ENCODE measurements at regions of chr16 and their contacts with region 1.

Region 1: DNA sequence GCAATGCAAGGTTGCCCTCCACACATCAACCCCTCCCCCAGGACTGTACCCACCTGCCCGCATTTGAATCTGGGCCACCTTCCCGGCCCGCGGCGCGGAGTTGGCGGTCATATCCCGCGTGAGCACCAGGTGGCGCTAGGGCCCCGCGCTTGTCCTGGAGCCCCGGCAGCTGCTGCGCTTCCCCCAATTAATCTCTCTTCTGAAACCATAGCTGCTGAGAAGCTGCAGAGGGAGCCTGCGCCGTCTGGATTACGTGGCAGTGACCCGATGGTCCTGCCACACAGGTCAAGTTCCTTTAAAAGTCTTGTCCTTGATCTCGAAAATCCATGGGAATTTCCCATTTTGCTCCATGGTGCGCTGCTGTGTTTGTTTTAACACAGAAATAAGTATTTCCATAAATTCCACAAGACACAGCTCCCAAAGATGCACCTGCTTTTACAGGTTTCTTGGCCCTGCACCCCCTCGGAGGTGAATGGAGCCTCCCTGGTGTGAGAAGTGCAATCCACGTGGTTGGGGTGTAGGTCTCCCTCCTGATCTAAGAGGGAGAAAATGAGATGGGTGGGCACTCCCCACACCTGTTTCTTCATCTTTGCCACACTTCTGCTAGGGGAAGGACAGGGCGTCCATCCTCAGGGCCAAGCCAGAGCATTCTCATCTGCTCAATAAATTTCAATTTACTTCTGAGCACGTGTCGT is 22.1 kb downstream of the COX4I1 start:
- DNase-seq: peak; percentile 89
- ATAC-seq: peak; percentile 80
- H3K4me3 Mint-ChIP-seq: no peak overlapping the region
- H3K27ac Mint-ChIP-seq: no peak overlapping the region
- H3K4me1 Mint-ChIP-seq: peaks cover 4% of the 10 kb centered on the region; the same call in 1 of the 2 replicates
- H3K27me3 Mint-ChIP-seq: peaks cover 29% of the 10 kb centered on the region
- CTCF ChIP-seq: peak; percentile 98

Region 2: DNA sequence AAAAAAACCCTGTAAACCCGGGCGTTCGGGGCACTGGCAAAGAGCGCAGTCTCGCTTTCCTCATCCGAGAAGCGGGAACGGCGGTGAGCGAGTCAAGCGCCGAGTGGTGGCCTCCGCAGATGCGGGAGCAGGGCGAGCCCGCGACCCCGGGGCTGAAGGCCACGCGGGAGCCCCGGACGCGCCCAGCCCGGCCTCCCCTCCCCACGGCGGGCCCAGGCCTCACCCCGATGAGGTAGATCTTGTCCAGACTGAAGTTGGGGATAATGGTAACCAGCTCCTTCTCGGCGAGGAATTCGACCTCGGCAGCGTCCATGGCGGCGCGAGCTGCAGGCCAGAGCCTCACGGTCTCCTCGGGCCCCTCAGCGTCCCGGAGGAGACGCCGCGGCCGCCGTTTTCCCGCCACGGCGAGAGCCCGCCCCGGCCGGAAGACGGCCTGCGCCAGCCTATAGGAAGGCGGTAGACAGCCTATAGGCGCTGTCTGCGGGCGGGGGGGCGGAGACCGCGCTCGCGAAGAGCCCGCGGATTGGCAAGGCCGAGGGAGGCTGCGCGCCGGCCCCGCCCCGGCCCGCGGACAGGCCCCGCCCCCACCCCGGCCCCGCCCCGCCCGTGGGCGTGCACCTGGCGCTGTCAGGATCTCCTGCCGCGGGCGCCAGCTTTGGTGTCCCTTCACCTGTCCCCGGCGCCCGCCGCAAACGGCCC is 132.9 kb before region 1 on chr16 and contains the start of gene GINS2:
- CTCF ChIA-PET with region 1: no interaction called
- POLR2A ChIA-PET with region 1: no interaction called
- DNase-seq: peak; percentile 93
- ATAC-seq: peak; percentile 99
- H3K4me3 Mint-ChIP-seq: peak within 1 kb of the TSS; percentile 74
- H3K27ac Mint-ChIP-seq: no peak within 1 kb of the TSS
- H3K4me1 Mint-ChIP-seq: peaks cover 10% of the 10 kb centered on the region
- H3K27me3 Mint-ChIP-seq: peaks cover 17% of the 10 kb centered on the region; the same call in 1 of the 2 replicates
- CTCF ChIP-seq: no peak
- total RNA-seq, gene GINS2: 35.5 to 38.4 TPM (median 38.0 TPM) in 3 replicates

Region 3: GRCh38 chr16:85699628-85700027 is 122.0 kb before region 1 on chr16:
- CTCF ChIA-PET with region 1: no interaction called
- POLR2A ChIA-PET with region 1: no interaction called
- DNase-seq: no peak
- ATAC-seq: 0 out of 2 replicates have a peak, but pooled peaks have one; percentile 7
- H3K4me3 Mint-ChIP-seq: no peak overlapping the region
- H3K27ac Mint-ChIP-seq: no peak overlapping the region
- H3K4me1 Mint-ChIP-seq: 0 out of 2 replicates have a peak, but pooled peaks cover 6% of the 10 kb centered on the region
- H3K27me3 Mint-ChIP-seq: peaks cover 4% of the 10 kb centered on the region
- CTCF ChIP-seq: no peak

Region 4: GRCh38 chr16:85750827-85751697 is 70.5 kb before region 1 on chr16 and contains the start of gene C16orf74:
- CTCF ChIA-PET with region 1: no interaction called
- POLR2A ChIA-PET with region 1: no interaction called
- DNase-seq: peak; percentile 35
- ATAC-seq: peak; percentile 46
- H3K4me3 Mint-ChIP-seq: peak within 1 kb of the TSS; percentile 89
- H3K27ac Mint-ChIP-seq: no peak within 1 kb of the TSS
- H3K4me1 Mint-ChIP-seq: peaks cover 45% of the 10 kb centered on the region
- H3K27me3 Mint-ChIP-seq: peaks cover 26% of the 10 kb centered on the region
- CTCF ChIP-seq: no peak
- total RNA-seq, gene C16orf74: 6.3 to 8.3 TPM (median 7.9 TPM) in 3 replicates

Region 5: DNA sequence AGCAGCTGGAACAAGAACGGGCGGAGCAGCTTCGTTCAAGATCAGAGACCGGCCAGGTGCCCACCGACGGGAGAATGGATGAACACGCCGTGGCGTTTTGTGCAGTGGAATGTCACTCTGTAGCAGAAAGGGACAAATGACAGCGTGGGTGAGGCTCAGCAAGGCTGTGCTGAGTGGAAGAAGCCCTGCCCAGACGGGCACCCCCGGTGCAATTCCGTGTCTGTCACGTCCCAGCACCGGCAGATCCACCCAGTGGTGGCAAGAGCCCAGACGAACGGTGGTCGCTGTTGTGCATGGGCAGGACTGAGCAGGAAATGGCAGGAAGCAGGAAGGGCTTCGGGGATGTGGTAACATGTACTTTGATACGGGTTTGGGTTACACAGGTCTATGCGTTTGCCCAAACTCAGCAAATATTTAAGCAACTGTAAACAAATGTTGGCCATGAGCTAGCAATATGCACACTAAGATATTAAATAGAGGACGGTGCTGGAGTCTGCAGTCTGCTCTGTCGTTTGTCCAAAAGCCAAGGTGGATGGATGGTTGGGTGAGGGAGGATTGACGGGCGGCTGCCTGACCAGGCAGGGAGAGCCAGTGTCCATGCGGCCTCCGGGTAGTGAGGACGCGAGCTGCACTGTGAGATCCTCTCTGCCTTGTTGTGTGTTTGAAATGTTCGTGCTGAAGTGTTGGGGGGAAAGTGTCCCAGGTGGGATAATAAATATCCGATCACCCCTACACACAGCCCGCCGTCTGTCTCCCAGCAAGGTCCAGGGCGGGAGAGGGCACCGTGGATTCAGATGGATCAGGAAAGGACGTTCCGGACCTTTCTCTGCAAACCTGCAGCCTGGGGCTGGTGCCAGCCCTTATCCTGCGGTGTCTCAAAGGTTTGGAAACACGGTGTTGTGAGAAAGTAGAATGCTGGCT is 26.4 kb after region 1 on chr16:
- CTCF ChIA-PET with region 1: interaction called, 13 read pairs
- POLR2A ChIA-PET with region 1: no interaction called
- DNase-seq: no peak
- ATAC-seq: no peak
- H3K4me3 Mint-ChIP-seq: no peak overlapping the region
- H3K27ac Mint-ChIP-seq: no peak overlapping the region
- H3K4me1 Mint-ChIP-seq: peaks cover 9% of the 10 kb centered on the region
- H3K27me3 Mint-ChIP-seq: no peaks in the 10 kb centered on the region
- CTCF ChIP-seq: no peak

Region 6: DNA sequence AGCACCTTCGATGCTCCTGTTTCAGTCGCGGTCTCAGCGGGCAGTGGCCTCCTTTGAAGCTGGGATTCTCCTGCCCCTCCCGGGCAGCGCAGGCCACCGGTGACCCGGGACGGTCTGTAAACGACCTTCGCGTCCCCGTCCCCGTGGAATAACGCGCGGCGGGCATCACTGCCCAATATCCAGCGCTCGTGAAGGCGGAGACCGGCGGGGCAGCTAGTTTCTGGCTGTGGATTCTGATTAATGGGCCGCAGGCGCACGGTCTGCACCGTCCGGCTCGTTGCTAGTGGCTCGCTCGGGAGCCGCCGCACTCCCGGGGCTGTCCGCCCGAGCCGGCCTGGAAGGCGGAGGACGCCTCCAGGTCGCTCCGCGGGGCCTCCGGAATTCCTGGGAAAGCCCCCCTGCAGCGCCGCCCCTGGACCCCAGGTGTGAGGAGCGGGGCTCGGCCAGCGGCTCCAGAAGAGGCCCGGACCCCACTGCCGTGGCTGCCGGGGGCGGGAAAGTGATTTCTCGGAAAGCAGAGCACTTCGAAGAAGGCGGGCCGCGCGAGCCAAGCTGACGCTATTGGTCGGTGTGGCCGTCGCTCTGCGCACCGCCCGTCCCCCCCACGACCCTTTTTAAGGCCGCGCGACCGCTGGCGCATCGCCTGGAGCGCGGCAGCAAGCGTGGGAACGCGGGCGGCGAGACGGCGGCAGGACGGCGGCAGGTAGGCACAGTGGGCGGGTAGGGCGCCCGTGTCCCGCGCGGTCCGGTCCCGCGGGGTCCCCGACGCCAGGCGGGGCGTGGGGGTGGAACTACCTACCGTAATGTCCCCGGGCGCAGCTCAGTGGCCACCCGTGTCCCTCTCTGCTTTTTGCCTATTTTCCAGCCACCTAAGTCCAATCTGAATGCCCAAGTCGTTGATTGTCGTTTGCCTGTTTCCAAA is 77.2 kb after region 1 on chr16 and contains the start of gene IRF8:
- CTCF ChIA-PET with region 1: interaction called, 67 read pairs
- POLR2A ChIA-PET with region 1: no interaction called
- DNase-seq: peak; percentile 71
- ATAC-seq: peak; percentile 85
- H3K4me3 Mint-ChIP-seq: peak within 1 kb of the TSS; percentile 69
- H3K27ac Mint-ChIP-seq: no peak within 1 kb of the TSS
- H3K4me1 Mint-ChIP-seq: peaks cover 4% of the 10 kb centered on the region
- H3K27me3 Mint-ChIP-seq: peaks cover 74% of the 10 kb centered on the region
- CTCF ChIP-seq: no peak
- total RNA-seq, gene IRF8: 1.1 to 1.7 TPM (median 1.3 TPM) in 3 replicates

Region 7: DNA sequence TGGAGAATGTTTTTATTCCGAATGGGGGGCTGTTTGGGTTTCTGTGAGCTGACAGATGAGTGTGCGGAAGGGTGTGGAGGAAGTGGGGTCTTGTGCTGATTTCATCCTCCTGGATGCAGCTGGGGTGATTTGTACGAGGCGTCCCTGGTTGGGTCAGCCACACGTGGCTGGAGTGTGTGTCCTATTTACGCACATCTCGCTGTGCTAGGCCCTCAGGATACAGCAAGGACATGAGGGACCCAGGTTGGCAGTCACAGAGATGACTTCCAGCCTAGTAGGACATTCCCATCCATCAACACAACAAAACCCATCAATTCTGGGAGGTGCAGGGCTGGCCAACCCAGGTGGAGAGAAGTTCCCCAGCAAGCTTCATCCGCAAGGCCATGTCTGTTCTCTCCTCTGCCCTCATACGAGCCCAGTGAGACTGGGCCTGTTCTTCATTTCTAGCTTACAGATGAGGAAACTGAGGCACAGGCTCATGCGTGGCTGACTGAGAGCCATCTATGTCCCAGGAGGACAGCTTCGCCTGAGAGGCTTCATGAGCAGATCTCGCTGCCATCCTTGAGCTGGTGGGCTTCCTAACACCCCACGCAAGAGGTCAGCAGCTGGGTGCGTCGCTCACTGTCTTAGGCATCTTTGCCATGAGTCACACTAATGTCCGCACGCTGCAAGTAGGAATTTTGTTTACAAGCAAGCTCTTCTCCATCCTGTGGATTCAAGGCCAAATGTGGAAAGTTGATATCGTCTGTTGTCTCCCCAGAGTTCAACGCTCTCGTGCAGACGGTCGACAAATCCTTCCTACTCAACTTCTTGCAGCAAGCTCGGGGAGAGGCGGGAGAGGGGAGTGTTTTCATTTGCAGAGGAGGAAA is 101.8 kb after region 1 on chr16:
- CTCF ChIA-PET with region 1: interaction called, 21 read pairs
- POLR2A ChIA-PET with region 1: no interaction called
- DNase-seq: no peak
- ATAC-seq: no peak
- H3K4me3 Mint-ChIP-seq: no peak overlapping the region
- H3K27ac Mint-ChIP-seq: 0 out of 2 replicates have a peak overlapping the region, but pooled peaks have one; percentile 37
- H3K4me1 Mint-ChIP-seq: peaks cover 9% of the 10 kb centered on the region
- H3K27me3 Mint-ChIP-seq: no peaks in the 10 kb centered on the region
- CTCF ChIP-seq: no peak

Region 8: GRCh38 chr16:85986931-85987749 is 165.6 kb after region 1 on chr16:
- CTCF ChIA-PET with region 1: interaction called, 291 read pairs
- POLR2A ChIA-PET with region 1: interaction called, 3 read pairs
- DNase-seq: peak; percentile 47
- ATAC-seq: peak; percentile 75
- H3K4me3 Mint-ChIP-seq: no peak overlapping the region
- H3K27ac Mint-ChIP-seq: no peak overlapping the region
- H3K4me1 Mint-ChIP-seq: no peaks in the 10 kb centered on the region
- H3K27me3 Mint-ChIP-seq: no peaks in the 10 kb centered on the region
- CTCF ChIP-seq: peak; percentile 78

Region 9: GRCh38 chr16:86029131-86029741 is 207.6 kb after region 1 on chr16:
- CTCF ChIA-PET with region 1: interaction called, 13 read pairs
- POLR2A ChIA-PET with region 1: no interaction called
- DNase-seq: no peak
- ATAC-seq: peak; percentile 33
- H3K4me3 Mint-ChIP-seq: no peak overlapping the region
- H3K27ac Mint-ChIP-seq: no peak overlapping the region
- H3K4me1 Mint-ChIP-seq: peaks cover 18% of the 10 kb centered on the region
- H3K27me3 Mint-ChIP-seq: peaks cover 16% of the 10 kb centered on the region
- CTCF ChIP-seq: no peak

Measured in WTC11 (cell line).